Activated CD4-positive, alpha-beta memory T cell treated with anti-CD3 and anti-CD28 coated beads for 36 hours (primary cell): ENCODE measurements at regions of chr18 and their contacts with region 1.

Region 1: GRCh38 chr18:9136315-9137155 is at the start of gene ANKRD12:
- DNase-seq: peak; percentile 99
- H3K4me3 Mint-ChIP-seq: peak within 1 kb of the TSS; percentile 95
- H3K27ac Mint-ChIP-seq: peak within 1 kb of the TSS; percentile 98
- H3K4me1 Mint-ChIP-seq: peaks cover 53% of the 10 kb centered on the region
- H3K27me3 Mint-ChIP-seq: no peaks in the 10 kb centered on the region
- total RNA-seq, gene ANKRD12: 77.8 to 83.9 TPM

Region 2: GRCh38 chr18:8704361-8705279 is 431.9 kb before region 1 on chr18:
- CTCF ChIA-PET with region 1: no interaction called
- POLR2A ChIA-PET with region 1: no interaction called
- intact Hi-C with region 1: loop called (anchors 2 kb)
- DNase-seq: peak; percentile 85
- H3K4me3 Mint-ChIP-seq: peak overlapping the region; percentile 84
- H3K27ac Mint-ChIP-seq: no peak overlapping the region
- H3K4me1 Mint-ChIP-seq: peaks cover 14% of the 10 kb centered on the region
- H3K27me3 Mint-ChIP-seq: peaks cover 46% of the 10 kb centered on the region

Region 3: GRCh38 chr18:8948471-8949149 is 187.9 kb before region 1 on chr18:
- CTCF ChIA-PET with region 1: no interaction called
- POLR2A ChIA-PET with region 1: no interaction called
- intact Hi-C with region 1: no loop called
- DNase-seq: no peak
- H3K4me3 Mint-ChIP-seq: no peak overlapping the region
- H3K27ac Mint-ChIP-seq: no peak overlapping the region
- H3K4me1 Mint-ChIP-seq: peaks cover 6% of the 10 kb centered on the region
- H3K27me3 Mint-ChIP-seq: peaks cover 10% of the 10 kb centered on the region

Region 4: GRCh38 chr18:9102508-9103375 is 33.8 kb before region 1 on chr18 and contains the start of gene NDUFV2:
- CTCF ChIA-PET with region 1: interaction called, 9 read pairs
- POLR2A ChIA-PET with region 1: interaction called, 178 read pairs
- intact Hi-C with region 1: loop called (anchors 1 kb)
- DNase-seq: peak; percentile 99
- H3K4me3 Mint-ChIP-seq: peak within 1 kb of the TSS; percentile 90
- H3K27ac Mint-ChIP-seq: peak within 1 kb of the TSS; percentile 95
- H3K4me1 Mint-ChIP-seq: peaks cover 39% of the 10 kb centered on the region
- H3K27me3 Mint-ChIP-seq: no peaks in the 10 kb centered on the region
- total RNA-seq, gene NDUFV2: 535 to 552 TPM

Region 5: GRCh38 chr18:9126337-9126736 is 10.2 kb before region 1 on chr18:
- CTCF ChIA-PET with region 1: interaction called, 8 read pairs
- POLR2A ChIA-PET with region 1: interaction called, 12 read pairs
- intact Hi-C with region 1: no loop called
- DNase-seq: no peak
- H3K4me3 Mint-ChIP-seq: no peak overlapping the region
- H3K27ac Mint-ChIP-seq: peak overlapping the region; percentile 23
- H3K4me1 Mint-ChIP-seq: peaks cover 47% of the 10 kb centered on the region
- H3K27me3 Mint-ChIP-seq: no peaks in the 10 kb centered on the region

Region 6: DNA sequence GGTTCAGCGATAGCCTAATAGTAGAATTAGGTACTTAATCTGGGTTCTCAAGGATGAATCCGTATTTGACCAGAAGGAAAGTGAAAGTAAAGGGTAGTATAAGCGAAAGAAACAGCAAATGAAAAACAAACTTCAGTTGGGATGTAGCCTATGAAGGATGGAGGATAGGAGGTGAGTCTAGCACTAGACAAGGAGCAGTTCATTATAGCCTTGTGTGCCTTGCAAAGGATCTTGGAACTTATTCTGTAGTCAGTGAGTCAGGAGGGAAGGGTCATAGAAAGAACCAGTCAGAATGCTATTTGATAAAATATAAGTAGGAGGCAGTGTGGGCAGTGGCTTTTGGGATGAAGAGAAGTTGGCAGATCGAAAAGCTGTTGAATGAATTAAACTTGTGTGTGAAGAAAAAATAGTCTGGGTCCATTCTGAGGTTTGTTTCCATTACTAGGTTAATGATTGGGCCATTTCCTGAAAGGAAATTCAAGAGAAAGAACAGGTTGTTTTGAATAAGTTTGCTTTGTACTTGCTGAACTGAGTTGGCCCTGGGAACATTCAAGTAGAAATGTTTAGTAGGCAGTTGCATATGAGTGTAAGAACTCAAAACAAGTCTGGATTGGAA is 48.6 kb after region 1 on chr18:
- CTCF ChIA-PET with region 1: no interaction called
- POLR2A ChIA-PET with region 1: interaction called, 3 read pairs
- intact Hi-C with region 1: loop called (anchors 5 kb)
- DNase-seq: peak; percentile 44
- H3K4me3 Mint-ChIP-seq: peak overlapping the region; percentile 65
- H3K27ac Mint-ChIP-seq: peak overlapping the region; percentile 73
- H3K4me1 Mint-ChIP-seq: peaks cover 65% of the 10 kb centered on the region
- H3K27me3 Mint-ChIP-seq: no peaks in the 10 kb centered on the region

Region 7: DNA sequence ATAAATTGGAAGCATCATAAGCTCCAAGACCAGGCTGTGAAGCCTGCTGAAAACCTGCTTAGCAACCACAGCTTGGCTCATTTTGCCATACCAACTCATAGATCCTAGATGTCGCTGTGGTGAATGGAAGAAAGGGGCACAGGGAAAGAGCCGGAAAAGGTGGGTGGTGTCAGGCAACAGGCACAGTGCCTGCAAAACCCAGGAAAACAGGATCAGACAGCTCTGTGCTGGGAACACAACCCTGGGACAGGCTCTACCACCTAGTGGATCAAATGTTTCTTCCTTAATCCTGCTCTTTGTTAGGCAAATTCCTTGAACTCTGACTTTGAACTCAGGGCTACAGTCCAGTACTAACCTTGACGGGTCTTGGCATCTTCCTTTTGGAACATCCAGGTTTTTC is 229.7 kb after region 1 on chr18:
- CTCF ChIA-PET with region 1: no interaction called
- POLR2A ChIA-PET with region 1: no interaction called
- intact Hi-C with region 1: no loop called
- DNase-seq: no peak
- H3K4me3 Mint-ChIP-seq: no peak overlapping the region
- H3K27ac Mint-ChIP-seq: no peak overlapping the region
- H3K4me1 Mint-ChIP-seq: no peaks in the 10 kb centered on the region
- H3K27me3 Mint-ChIP-seq: no peaks in the 10 kb centered on the region

Region 8: DNA sequence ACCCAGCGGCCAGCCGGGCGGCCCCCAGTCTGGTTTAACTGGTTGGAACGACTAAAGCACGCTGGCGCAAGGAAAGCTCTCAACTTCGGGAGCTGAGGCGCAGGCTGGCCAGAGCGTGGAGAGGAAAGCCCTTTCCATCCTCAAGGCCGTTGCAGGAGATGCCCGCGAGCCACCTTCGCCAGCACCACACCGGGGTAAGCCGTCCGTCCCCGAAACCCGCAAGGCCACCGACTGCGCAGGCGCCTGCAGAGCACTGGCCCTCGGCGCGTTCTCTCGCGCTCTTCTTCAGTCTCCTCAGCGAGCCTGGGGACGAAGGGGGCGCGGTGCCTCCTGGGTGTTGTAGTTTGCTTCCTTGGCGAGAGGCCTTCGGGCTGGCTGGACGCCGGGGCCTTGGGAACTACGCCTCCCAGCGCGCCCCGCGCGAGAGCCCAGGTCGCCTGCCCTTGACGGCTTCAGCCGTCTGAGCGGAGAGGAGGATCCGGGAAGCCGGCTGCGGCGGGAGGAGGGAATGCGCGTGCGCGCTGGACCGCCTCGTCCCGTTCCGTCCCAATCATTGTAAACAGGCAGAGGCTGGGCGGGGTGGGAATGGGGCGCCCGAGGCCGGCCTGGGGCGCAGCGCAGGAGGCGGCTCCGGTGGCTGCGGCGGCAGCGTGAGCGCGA is 338.6 kb after region 1 on chr18 and contains the start of gene RALBP1:
- CTCF ChIA-PET with region 1: no interaction called
- POLR2A ChIA-PET with region 1: no interaction called
- intact Hi-C with region 1: loop called (anchors 1 kb)
- DNase-seq: peak; percentile 99
- H3K4me3 Mint-ChIP-seq: peak within 1 kb of the TSS; percentile 92
- H3K27ac Mint-ChIP-seq: peak within 1 kb of the TSS; percentile 93
- H3K4me1 Mint-ChIP-seq: peaks cover 28% of the 10 kb centered on the region
- H3K27me3 Mint-ChIP-seq: peaks cover 11% of the 10 kb centered on the region
- total RNA-seq, gene RALBP1: 53.1 to 54.7 TPM

Region 9: GRCh38 chr18:9506046-9506792 is 369.7 kb after region 1 on chr18:
- CTCF ChIA-PET with region 1: no interaction called
- POLR2A ChIA-PET with region 1: no interaction called
- intact Hi-C with region 1: no loop called
- DNase-seq: no peak
- H3K4me3 Mint-ChIP-seq: no peak overlapping the region
- H3K27ac Mint-ChIP-seq: no peak overlapping the region
- H3K4me1 Mint-ChIP-seq: peaks cover 30% of the 10 kb centered on the region
- H3K27me3 Mint-ChIP-seq: no peaks in the 10 kb centered on the region